ENCODE measurements at regions of chr17 and their contacts with region 1.

Region 1: DNA sequence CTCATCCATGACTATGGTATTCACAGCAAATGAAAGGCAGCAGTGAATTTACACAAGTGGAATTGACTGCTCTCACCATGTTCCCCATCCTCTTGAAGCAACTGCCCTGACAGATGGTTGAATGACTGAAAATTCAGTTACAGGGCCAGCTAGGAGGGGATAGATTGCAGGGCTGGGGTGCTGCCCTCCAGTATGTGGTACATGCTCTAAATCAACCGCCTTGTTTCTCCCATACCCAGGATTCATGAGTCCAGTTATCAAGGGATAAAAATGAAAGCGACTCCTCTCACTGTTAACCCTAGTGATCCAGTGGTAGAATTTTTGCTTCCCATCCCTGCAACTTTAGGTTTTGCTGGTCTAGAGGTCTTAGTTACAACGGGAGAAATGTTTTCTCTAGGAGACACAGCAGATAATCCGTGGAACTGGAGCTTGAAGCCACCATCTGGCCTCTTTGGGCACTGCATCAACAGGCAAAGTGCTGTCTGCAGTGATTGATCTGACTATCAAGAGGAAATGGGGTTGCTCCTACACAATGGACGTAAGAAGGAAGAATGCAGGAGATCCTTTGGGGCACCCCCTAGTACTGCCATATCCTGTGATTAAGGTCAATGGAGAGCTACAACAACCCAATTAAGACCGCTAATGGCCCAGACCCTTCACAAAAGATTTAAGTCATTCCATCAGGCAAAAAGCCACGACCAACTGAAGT is 32.0 kb downstream of the SCPEP1 start:
- DNase-seq: peak; percentile 81
- H3K4me3 ChIP-seq: no peak overlapping the region
- H3K27ac ChIP-seq: peak overlapping the region; percentile 17
- H3K4me1 ChIP-seq: peaks cover 38% of the 10 kb centered on the region
- CTCF ChIP-seq: peak; percentile 86

Region 2: DNA sequence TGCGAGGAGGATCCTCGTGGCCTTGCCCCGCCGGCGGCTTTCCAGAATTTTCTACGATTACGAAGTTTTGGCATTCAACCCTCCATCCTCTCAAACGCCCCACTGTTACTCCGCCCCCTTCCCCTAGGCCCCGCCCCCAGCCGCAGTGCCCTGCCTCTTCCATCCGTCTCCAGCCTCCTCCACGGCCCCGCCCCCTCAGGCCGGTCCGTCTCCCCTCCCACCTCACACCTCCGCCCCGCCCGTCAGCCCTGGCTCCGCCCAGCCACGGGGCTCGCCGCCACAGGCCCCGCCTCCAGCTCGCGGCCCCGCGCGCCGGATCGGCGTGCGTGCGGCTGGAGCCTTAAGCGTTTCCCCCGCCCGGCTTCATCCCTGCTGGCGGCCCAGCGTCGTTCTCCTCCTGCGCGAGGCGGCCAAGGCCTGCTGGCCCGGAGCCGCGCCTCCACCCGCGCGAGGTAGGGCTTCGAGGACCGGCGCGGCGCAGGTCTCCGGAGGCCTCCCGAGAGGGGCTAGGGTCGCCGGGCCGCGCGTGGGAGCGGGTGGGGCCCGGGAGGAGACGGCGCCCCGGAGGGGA is 176.0 kb before region 1 on chr17 and contains the starts of genes C17orf67 and DGKE:
- CTCF ChIA-PET with region 1: no interaction called
- POLR2A ChIA-PET with region 1: no interaction called
- intact Hi-C with region 1: loop called (anchors 5 kb)
- DNase-seq: peak; percentile 93
- H3K4me3 ChIP-seq: peak within 1 kb of the TSS; percentile 77
- H3K27ac ChIP-seq: peak within 1 kb of the TSS; percentile 52
- H3K4me1 ChIP-seq: peaks cover 59% of the 10 kb centered on the region
- CTCF ChIP-seq: no peak
- total RNA-seq, gene C17orf67: 5.2 and 5.8 TPM in 2 replicates
- total RNA-seq, gene DGKE: 6.2 and 8.6 TPM in 2 replicates

Region 3: DNA sequence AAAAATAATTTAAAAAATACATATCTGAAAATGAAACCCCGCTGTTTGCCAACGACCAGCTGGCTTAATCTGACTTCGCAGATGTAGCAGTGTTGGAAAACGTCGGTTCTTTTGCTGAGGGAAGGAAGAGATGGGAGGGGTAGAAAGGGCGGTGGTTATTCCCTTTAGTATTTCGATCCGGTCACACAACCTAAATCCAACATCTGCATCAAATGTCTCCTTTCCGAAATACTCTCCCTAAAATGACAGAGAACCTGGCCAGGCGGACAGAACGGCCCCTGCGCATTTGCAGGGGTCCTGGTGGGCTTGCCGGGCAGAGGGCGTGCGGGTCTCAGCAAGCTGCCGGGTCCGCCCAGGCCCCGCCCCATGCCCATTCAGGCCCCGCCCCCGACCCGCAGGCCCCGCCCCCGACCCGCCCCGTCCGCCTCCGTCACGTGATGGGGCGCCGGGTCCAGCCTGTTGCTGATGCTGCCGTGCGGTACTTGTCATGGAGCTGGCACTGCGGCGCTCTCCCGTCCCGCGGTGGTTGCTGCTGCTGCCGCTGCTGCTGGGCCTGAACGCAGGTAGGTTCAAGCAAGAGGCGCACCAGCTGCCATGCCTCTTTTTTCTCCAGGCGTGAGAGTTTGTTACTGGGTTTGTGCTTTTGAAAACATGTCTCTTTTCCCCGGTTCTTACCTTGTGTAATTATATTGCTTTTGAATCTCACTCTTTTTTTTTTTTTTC is 32.1 kb before region 1 on chr17 and contains the start of gene SCPEP1:
- CTCF ChIA-PET with region 1: no interaction called
- POLR2A ChIA-PET with region 1: no interaction called
- intact Hi-C with region 1: loop called (anchors 1 kb)
- DNase-seq: peak; percentile 90
- H3K4me3 ChIP-seq: peak within 1 kb of the TSS; percentile 78
- H3K27ac ChIP-seq: peak within 1 kb of the TSS; percentile 45
- H3K4me1 ChIP-seq: peaks cover 25% of the 10 kb centered on the region
- CTCF ChIP-seq: 0 out of 2 replicates have a peak, but pooled peaks have one; percentile 16
- total RNA-seq, gene SCPEP1: 36.5 and 48.2 TPM in 2 replicates

Region 4: DNA sequence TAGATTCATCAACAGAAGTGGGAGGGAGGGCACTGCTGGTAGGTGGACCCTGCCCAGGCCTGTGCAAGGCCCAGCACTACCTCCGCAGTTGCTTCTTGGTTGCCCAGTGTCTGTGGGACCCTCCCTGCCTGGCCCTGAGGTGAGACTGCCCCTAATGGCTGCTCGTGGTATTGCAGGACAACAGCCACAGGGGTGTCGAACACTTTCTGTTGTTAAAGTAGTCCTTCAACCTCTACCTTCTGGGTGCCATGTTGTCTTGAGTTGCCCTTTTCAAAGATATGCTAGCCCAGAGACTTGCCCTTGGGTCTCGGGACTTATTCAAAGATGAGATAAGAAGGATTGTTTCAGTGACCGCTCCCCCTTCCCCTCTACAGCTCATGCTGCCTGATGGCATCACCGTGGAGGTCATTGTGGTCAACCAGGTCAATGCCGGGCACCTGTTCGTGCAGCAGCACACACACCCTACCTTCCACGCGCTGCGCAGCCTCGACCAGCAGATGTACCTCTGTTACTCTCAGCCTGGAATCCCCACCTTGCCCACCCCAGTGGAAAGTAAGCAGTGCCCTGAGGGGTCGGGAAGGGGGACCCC is 104.3 kb after region 1 on chr17:
- CTCF ChIA-PET with region 1: no interaction called
- POLR2A ChIA-PET with region 1: no interaction called
- intact Hi-C with region 1: loop called (anchors 10 kb)
- DNase-seq: peak; percentile 57
- H3K4me3 ChIP-seq: no peak overlapping the region
- H3K27ac ChIP-seq: no peak overlapping the region
- H3K4me1 ChIP-seq: no peaks in the 10 kb centered on the region
- CTCF ChIP-seq: peak; percentile 89